Ovary (tissue), 10 donors: ENCODE measurements at regions of chr17 and their contacts with region 1.

Region 1: DNA sequence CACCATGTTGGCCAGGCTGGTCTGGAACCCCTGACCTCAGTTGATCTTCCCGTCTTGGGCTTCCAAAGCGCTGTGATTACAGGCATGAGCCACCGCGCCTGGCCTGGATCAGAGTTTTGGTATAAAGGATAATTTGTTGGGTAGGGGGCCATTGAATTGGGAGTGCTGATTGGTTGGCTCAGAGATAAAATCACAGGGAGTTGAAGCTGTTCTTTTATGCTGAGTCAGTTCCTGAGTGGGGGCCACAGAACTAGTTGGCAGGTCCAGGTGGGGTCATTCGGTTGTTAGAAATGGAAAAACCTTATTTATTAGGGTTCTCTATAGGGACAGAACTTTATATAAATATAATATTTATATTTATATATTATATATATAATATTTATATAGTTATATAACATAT is 147.1 kb downstream of the SSH2 start:
- DNase-seq: no peak
- H3K4me3 ChIP-seq: no peak overlapping the region
- H3K27ac ChIP-seq: no peak overlapping the region
- H3K4me1 ChIP-seq: no peaks in the 10 kb centered on the region
- H3K27me3 ChIP-seq: no peaks in the 10 kb centered on the region
- CTCF ChIP-seq: no peak
- EP300 ChIP-seq: no peak
- POLR2A ChIP-seq: no peak

Region 2: GRCh38 chr17:29640413-29640812 is 142.5 kb before region 1 on chr17:
- intact Hi-C with region 1: loop called in 3 of 4 experiments (anchors 5 to 10 kb)
- DNase-seq: no peak
- H3K4me3 ChIP-seq: no peak overlapping the region
- H3K27ac ChIP-seq: no peak overlapping the region
- H3K4me1 ChIP-seq: peaks cover 4% of the 10 kb centered on the region
- H3K27me3 ChIP-seq: no peaks in the 10 kb centered on the region
- CTCF ChIP-seq: no peak
- EP300 ChIP-seq: no peak
- POLR2A ChIP-seq: no peak